IMR-90 (cell line): ENCODE measurements at regions of chr4 and their contacts with region 1.

Region 1: GRCh38 chr4:177047070-177047850 is 254.5 kb upstream of the VEGFC start:
- DNase-seq: peak; percentile 81
- ATAC-seq: peak; percentile 99
- H3K4me3 ChIP-seq: no peak overlapping the region
- H3K27ac ChIP-seq: no peak overlapping the region
- H3K4me1 ChIP-seq: no peaks in the 10 kb centered on the region
- H3K27me3 ChIP-seq: no peaks in the 10 kb centered on the region
- CTCF ChIP-seq: peak; percentile 82
- POLR2A ChIP-seq: 0 out of 2 replicates have a peak, but pooled peaks have one; percentile 25
- RAD21 ChIP-seq: peak; percentile 96

Region 2: DNA sequence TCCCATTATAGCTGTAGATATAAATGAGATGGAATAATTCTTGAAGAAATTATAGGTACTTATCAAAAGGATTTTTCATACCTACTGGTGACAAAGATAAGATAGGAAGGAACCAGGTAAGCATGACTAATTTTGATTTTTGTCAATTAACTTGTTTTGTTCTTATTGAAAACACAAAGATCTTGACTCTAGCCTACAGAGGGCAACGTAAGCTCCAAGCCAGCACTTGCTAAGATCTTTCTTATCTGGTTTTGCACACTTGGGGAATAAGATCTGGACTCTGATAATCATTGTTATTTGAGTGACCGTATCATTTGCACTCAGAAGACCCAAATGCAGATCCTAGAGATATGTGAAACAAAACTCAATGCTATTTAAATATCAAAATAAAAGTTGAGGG is 478.0 kb before region 1 on chr4:
- CTCF ChIA-PET with region 1: no interaction called
- POLR2A ChIA-PET with region 1: no interaction called
- dilution Hi-C with region 1: no loop called
- in situ Hi-C with region 1: no loop called
- intact Hi-C with region 1: loop called (anchors 5 kb)
- DNase-seq: no peak
- ATAC-seq: no peak
- H3K4me3 ChIP-seq: no peak overlapping the region
- H3K27ac ChIP-seq: no peak overlapping the region
- H3K4me1 ChIP-seq: no peaks in the 10 kb centered on the region
- H3K27me3 ChIP-seq: no peaks in the 10 kb centered on the region
- CTCF ChIP-seq: no peak
- POLR2A ChIP-seq: no peak
- RAD21 ChIP-seq: no peak

Region 3: GRCh38 chr4:176902710-176903323 is 144.4 kb before region 1 on chr4:
- CTCF ChIA-PET with region 1: interaction called, 12 read pairs
- POLR2A ChIA-PET with region 1: no interaction called
- dilution Hi-C with region 1: no loop called
- in situ Hi-C with region 1: no loop called
- intact Hi-C with region 1: no loop called
- DNase-seq: peak; percentile 95
- ATAC-seq: peak; percentile 90
- H3K4me3 ChIP-seq: peak overlapping the region; percentile 36; the same call in 1 of the 2 replicates
- H3K27ac ChIP-seq: peak overlapping the region; percentile 63
- H3K4me1 ChIP-seq: peaks cover 6% of the 10 kb centered on the region; the same call in 1 of the 2 replicates
- H3K27me3 ChIP-seq: no peaks in the 10 kb centered on the region
- CTCF ChIP-seq: no peak
- POLR2A ChIP-seq: no peak
- RAD21 ChIP-seq: no peak; the same call in 1 of the 2 replicates

Region 4: DNA sequence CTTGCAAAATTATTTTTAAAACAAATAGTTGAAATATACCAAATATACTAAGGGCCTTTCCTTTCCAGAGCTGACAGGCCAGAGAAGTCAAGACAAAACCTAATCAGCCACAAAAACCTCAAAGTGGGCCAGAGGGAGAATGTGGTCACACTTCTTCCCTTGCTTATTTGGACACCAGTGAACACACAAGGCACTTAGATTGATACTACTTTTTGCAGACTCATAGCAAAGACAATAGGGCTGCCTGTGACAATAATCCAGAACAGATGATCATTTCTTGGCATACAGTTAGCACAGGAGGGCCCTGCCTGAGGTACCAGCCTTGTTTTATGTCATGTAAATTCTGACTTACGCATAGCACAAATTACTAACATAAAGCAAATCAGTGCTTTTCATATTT is 46.7 kb after region 1 on chr4:
- CTCF ChIA-PET with region 1: interaction called, 15 read pairs
- POLR2A ChIA-PET with region 1: no interaction called
- dilution Hi-C with region 1: no loop called
- in situ Hi-C with region 1: no loop called
- intact Hi-C with region 1: no loop called
- DNase-seq: no peak
- ATAC-seq: no peak
- H3K4me3 ChIP-seq: no peak overlapping the region
- H3K27ac ChIP-seq: no peak overlapping the region
- H3K4me1 ChIP-seq: 0 out of 2 replicates have a peak, but pooled peaks cover 2% of the 10 kb centered on the region
- H3K27me3 ChIP-seq: no peaks in the 10 kb centered on the region
- CTCF ChIP-seq: no peak
- POLR2A ChIP-seq: no peak
- RAD21 ChIP-seq: no peak

Region 5: GRCh38 chr4:177100307-177100706 is 53.0 kb after region 1 on chr4:
- CTCF ChIA-PET with region 1: interaction called, 15 read pairs
- POLR2A ChIA-PET with region 1: no interaction called
- dilution Hi-C with region 1: no loop called
- in situ Hi-C with region 1: no loop called
- intact Hi-C with region 1: no loop called
- DNase-seq: no peak
- ATAC-seq: no peak
- H3K4me3 ChIP-seq: no peak overlapping the region
- H3K27ac ChIP-seq: no peak overlapping the region
- H3K4me1 ChIP-seq: no peaks in the 10 kb centered on the region
- H3K27me3 ChIP-seq: no peaks in the 10 kb centered on the region
- CTCF ChIP-seq: no peak
- POLR2A ChIP-seq: no peak
- RAD21 ChIP-seq: no peak

Region 6: DNA sequence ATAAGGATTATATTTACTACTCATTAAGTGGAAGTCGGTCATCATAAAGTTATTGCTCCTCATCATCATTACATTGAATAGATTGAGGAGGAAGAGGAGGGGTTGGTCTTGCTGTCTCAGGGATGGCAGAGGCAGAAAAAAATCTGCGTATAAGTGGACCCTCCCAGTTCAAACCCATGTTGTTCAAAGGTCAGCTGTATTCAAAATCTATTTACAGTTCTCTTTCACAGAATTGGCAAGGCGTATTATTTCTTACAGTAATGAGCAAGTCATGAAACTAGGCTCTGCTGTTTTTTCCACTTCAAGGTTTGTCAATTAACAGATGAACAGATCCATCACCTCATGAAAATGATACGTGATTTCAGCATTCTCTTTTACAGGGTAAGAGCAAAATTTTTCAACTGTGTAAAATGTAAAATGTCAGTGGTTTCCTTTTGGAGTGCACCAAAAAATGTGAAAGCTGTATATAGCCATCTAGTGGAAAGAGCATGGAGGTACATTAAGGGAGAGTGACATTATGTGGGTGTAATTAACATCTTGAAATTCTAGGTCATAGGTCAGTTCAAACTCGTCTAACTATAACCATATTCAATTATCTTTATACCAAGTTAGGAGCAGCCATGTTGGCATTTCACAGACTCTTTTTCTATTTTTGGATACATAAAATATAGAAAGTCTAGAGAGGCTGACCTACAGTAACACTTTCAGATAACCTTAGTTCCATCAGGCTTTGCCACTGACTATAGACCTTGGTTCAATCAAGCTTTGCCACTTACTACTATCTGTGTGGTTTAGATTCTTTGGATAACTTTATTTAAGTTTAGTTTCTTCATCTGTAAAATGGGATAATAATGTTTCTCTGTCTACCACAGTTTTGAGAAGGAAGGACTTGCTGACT is 292.5 kb after region 1 on chr4:
- CTCF ChIA-PET with region 1: interaction called, 3 read pairs
- POLR2A ChIA-PET with region 1: no interaction called
- dilution Hi-C with region 1: no loop called
- in situ Hi-C with region 1: no loop called
- intact Hi-C with region 1: loop called (anchors 5 kb)
- DNase-seq: peak; percentile 51
- ATAC-seq: peak; percentile 84
- H3K4me3 ChIP-seq: no peak overlapping the region
- H3K27ac ChIP-seq: no peak overlapping the region; the same call in 1 of the 2 replicates
- H3K4me1 ChIP-seq: peaks cover 2% of the 10 kb centered on the region; the same call in 1 of the 2 replicates
- H3K27me3 ChIP-seq: no peaks in the 10 kb centered on the region
- CTCF ChIP-seq: peak; percentile 79
- POLR2A ChIP-seq: no peak
- RAD21 ChIP-seq: peak; percentile 80